ENCODE measurements at regions of chr6 and their contacts with region 1.

Region 1: GRCh38 chr6:3052481-3053230 is 15.6 kb upstream of the RIPK1 start:
- DNase-seq: no peak
- ATAC-seq: no peak
- H3K4me3 Mint-ChIP-seq: peak overlapping the region; percentile 76
- H3K27ac Mint-ChIP-seq: no peak overlapping the region
- H3K4me1 Mint-ChIP-seq: peaks cover 14% of the 10 kb centered on the region
- H3K27me3 Mint-ChIP-seq: peaks cover 9% of the 10 kb centered on the region
- CTCF ChIP-seq: no peak

Region 2: DNA sequence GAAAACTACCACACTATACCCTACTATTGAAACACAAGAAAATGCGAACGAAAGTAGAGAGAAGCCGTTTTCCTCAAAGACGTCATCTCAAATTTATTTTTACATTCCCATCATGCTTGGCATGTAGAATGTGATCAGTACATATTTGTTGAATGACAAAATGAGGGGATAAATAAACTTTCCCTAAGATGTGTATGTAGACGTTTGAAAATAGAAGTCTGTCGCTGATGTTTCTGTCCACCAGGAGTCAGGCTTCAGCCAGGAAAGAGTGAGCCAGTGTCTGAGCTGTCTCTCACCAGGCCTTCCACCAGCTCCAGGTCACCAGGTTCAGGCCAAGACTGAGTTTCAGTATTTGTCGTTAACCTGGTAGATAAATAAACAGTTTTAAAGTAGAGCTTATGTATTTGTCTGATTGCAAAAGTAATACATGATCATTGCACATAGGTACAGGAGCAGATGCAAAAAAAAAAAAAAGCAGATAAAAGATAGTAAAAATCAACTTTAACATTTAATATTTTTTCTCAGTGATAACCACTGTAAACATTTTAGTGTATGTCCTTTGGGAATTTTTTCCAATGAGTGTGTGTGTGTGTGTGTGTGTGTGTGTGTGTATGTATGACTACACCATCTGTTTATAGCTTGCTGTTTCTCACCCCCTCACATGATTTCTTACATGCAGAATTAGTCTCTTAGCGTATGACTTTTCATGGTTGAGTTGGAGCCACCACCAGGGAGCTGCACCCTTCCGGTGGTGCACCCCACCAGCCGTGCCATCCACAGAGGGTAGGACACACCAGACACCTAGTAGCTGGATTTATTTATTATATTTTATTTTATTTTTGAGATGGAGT is 261.3 kb before region 1 on chr6:
- CTCF ChIA-PET with region 1: interaction called, 3 read pairs
- POLR2A ChIA-PET with region 1: interaction called, 5 read pairs
- intact Hi-C with region 1: loop called (anchors 1 kb)
- DNase-seq: no peak
- ATAC-seq: peak; percentile 91
- H3K4me3 Mint-ChIP-seq: peak overlapping the region; percentile 72
- H3K27ac Mint-ChIP-seq: peak overlapping the region; percentile 67
- H3K4me1 Mint-ChIP-seq: peaks cover 41% of the 10 kb centered on the region
- H3K27me3 Mint-ChIP-seq: no peaks in the 10 kb centered on the region
- CTCF ChIP-seq: no peak

Region 3: GRCh38 chr6:3023663-3024483 is 28.8 kb before region 1 on chr6:
- CTCF ChIA-PET with region 1: interaction called, 7 read pairs
- POLR2A ChIA-PET with region 1: interaction called, 64 read pairs
- intact Hi-C with region 1: loop called (anchors 1 kb)
- DNase-seq: peak; percentile 76
- ATAC-seq: peak; percentile 82
- H3K4me3 Mint-ChIP-seq: peak overlapping the region; percentile 90
- H3K27ac Mint-ChIP-seq: peak overlapping the region; percentile 88
- H3K4me1 Mint-ChIP-seq: peaks cover 54% of the 10 kb centered on the region
- H3K27me3 Mint-ChIP-seq: no peaks in the 10 kb centered on the region
- CTCF ChIP-seq: no peak

Region 4: GRCh38 chr6:3031857-3032640 is 20.6 kb before region 1 on chr6:
- CTCF ChIA-PET with region 1: interaction called, 3 read pairs
- POLR2A ChIA-PET with region 1: interaction called, 64 read pairs
- intact Hi-C with region 1: loop called (anchors 1 kb)
- DNase-seq: no peak
- ATAC-seq: peak; percentile 55
- H3K4me3 Mint-ChIP-seq: no peak overlapping the region
- H3K27ac Mint-ChIP-seq: no peak overlapping the region
- H3K4me1 Mint-ChIP-seq: peaks cover 20% of the 10 kb centered on the region
- H3K27me3 Mint-ChIP-seq: peaks cover 13% of the 10 kb centered on the region
- CTCF ChIP-seq: no peak

Region 5: GRCh38 chr6:3186974-3187382 is 134.3 kb after region 1 on chr6:
- CTCF ChIA-PET with region 1: no interaction called
- POLR2A ChIA-PET with region 1: no interaction called
- intact Hi-C with region 1: no loop called
- DNase-seq: no peak
- ATAC-seq: no peak
- H3K4me3 Mint-ChIP-seq: no peak overlapping the region
- H3K27ac Mint-ChIP-seq: no peak overlapping the region
- H3K4me1 Mint-ChIP-seq: no peaks in the 10 kb centered on the region
- H3K27me3 Mint-ChIP-seq: peaks cover 12% of the 10 kb centered on the region
- CTCF ChIP-seq: no peak